Panc1 (cell line): ENCODE measurements at regions of chr1 and their contacts with region 1.

Region 1: DNA sequence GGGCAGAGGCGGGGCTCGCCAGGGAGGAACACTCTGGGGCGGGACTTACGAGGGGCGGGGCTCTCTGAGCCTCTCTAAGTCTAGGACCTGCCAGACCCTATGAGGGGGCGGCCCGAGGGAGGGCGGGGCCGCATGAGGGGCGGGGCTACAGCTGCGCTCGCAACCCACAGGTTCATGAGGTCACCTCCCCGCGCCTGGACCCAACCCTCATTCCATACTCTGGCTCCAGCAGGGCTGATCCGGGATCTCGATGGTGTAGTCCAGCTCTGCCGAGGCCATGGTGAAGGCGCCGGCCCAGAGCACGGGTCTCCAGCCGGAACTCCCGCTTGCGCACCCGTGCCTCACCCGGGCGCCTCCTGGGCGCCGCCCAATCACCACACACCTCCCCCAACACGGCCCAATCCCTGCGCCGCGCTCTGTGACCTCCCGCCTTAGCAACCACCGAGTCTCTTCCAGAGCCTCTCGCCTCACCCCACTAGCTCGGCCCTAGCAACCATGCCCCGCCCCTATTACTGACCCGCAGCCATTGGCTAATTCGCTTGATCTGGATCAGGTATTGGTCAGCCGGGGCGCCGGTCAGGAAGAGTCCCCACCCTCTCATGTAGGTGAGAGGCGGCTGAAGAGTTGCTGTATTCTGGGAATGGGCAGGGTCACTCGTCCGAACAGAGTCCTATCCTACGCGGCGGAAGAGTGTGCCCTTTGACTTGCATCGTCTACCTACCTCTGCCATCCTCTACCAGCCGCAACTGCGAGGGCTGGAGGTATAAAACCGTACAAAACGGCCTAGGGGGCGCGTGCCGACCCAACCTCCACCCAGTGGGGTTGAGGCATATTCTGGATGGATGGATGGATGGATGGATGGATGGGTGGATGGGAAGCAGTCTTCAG is at the starts of genes ARMH1 and TMEM53:
- DNase-seq: peak; percentile 94
- ATAC-seq: peak; percentile 98
- H3K4me3 ChIP-seq: peak within 1 kb of the TSS; percentile 72 to 96
- H3K27ac ChIP-seq: peak within 1 kb of the TSS; percentile 93
- H3K4me1 ChIP-seq: peaks cover 26% of the 10 kb centered on the region
- H3K27me3 ChIP-seq: no peaks in the 10 kb centered on the region
- CTCF ChIP-seq: no peak
- total RNA-seq, gene ARMH1: 2.8 TPM
- total RNA-seq, gene TMEM53: 22.9 TPM

Region 2: DNA sequence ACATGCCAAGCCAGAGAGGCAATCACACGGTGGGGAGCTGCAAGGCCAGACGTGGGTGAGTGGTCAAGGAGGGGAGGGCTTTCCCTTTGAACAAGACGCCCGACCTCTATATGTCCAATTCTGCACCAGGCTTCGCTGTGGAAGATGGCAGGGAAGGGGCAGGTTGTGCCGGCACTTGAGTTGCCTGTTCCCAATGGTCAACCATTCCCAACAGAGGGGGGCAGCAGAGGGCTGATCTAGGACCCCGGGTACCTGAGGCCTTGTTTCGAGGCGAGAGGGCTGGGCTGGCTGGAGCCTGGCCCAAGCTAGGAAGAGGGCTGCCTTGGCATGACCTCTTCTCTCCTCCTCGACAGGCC is 65.0 kb before region 1 on chr1:
- CTCF ChIA-PET with region 1: no interaction called
- POLR2A ChIA-PET with region 1: no interaction called
- in situ Hi-C with region 1: no loop called
- intact Hi-C with region 1: no loop called
- DNase-seq: no peak
- ATAC-seq: peak; percentile 70; the same call in 1 of the 2 replicates
- H3K4me3 ChIP-seq: no peak overlapping the region
- H3K27ac ChIP-seq: no peak overlapping the region
- H3K4me1 ChIP-seq: no peaks in the 10 kb centered on the region
- H3K27me3 ChIP-seq: no peaks in the 10 kb centered on the region
- CTCF ChIP-seq: no peak; the same call in 1 of the 2 replicates

Region 3: GRCh38 chr1:44714944-44715571 is 40.7 kb after region 1 on chr1:
- CTCF ChIA-PET with region 1: no interaction called
- POLR2A ChIA-PET with region 1: interaction called, 13 read pairs
- in situ Hi-C with region 1: no loop called
- intact Hi-C with region 1: no loop called
- DNase-seq: peak; percentile 71
- ATAC-seq: peak; percentile 91
- H3K4me3 ChIP-seq: no peak overlapping the region
- H3K27ac ChIP-seq: no peak overlapping the region; the same call in 1 of the 2 replicates
- H3K4me1 ChIP-seq: no peaks in the 10 kb centered on the region
- H3K27me3 ChIP-seq: peaks cover 3% of the 10 kb centered on the region; the same call in 1 of the 2 replicates
- CTCF ChIP-seq: peak; percentile 97